Vagina (tissue), 2 donors: ENCODE measurements at regions of chrX and their contacts with region 1.

Region 1: GRCh38 chrX:28016823-28017222 is 35.6 kb upstream of the DCAF8L1 start:
- DNase-seq: no peak
- H3K4me3 ChIP-seq: no peak overlapping the region
- H3K27ac ChIP-seq: no peak overlapping the region
- H3K4me1 ChIP-seq: no peaks in the 10 kb centered on the region
- H3K27me3 ChIP-seq: no peaks in the 10 kb centered on the region
- CTCF ChIP-seq: no peak
- POLR2A ChIP-seq: no peak

Region 2: DNA sequence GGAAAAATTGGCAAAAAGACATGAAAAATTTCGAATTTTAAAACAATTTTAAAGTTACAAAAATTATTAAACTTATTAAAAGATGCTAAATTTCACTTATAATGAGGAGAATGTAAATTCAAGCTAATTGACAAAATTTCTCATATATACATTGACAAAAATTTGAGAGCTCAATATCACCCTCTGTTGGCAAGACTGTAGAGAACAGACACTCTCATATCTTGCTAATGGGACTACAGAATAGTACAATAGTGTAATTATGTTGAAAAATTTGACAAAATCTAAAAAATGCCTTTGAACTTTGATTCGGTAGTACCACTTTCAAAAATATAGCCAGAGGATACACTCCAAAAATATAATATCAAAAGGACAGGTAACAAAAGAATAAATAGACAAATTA is 396.8 kb before region 1 on chrX:
- intact Hi-C with region 1: loop called (anchors 10 kb)
- DNase-seq: no peak
- H3K4me3 ChIP-seq: no peak overlapping the region
- H3K27ac ChIP-seq: no peak overlapping the region
- H3K4me1 ChIP-seq: no peaks in the 10 kb centered on the region
- H3K27me3 ChIP-seq: no peaks in the 10 kb centered on the region
- CTCF ChIP-seq: no peak
- POLR2A ChIP-seq: no peak

Region 3: GRCh38 chrX:29254515-29254914 is 1237.7 kb after region 1 on chrX:
- intact Hi-C with region 1: no loop called
- DNase-seq: no peak
- H3K4me3 ChIP-seq: no peak overlapping the region
- H3K27ac ChIP-seq: no peak overlapping the region
- H3K4me1 ChIP-seq: no peaks in the 10 kb centered on the region
- H3K27me3 ChIP-seq: no peaks in the 10 kb centered on the region
- CTCF ChIP-seq: no peak
- POLR2A ChIP-seq: no peak